ENCODE measurements at regions of chr19 and their contacts with region 1.

Region 1: GRCh38 chr19:42244347-42245220 is 2.2 kb upstream of the GSK3A start:
- DNase-seq: peak; percentile 79 to 96 (median 91)
- ATAC-seq: peak; percentile 38
- H3K4me3 ChIP-seq: peak overlapping the region; percentile 68 to 85
- H3K4me3 Mint-ChIP-seq: peak overlapping the region; percentile 98
- H3K27ac ChIP-seq: peak overlapping the region; percentile 49 to 92
- H3K27ac Mint-ChIP-seq: peak overlapping the region; percentile 94
- H3K4me1 ChIP-seq: peaks cover 36% of the 10 kb centered on the region
- H3K4me1 Mint-ChIP-seq: peaks cover 50% of the 10 kb centered on the region
- H3K27me3 ChIP-seq: no peaks in the 10 kb centered on the region
- H3K27me3 Mint-ChIP-seq: no peaks in the 10 kb centered on the region
- CTCF ChIP-seq: peak; percentile 68

Region 2: DNA sequence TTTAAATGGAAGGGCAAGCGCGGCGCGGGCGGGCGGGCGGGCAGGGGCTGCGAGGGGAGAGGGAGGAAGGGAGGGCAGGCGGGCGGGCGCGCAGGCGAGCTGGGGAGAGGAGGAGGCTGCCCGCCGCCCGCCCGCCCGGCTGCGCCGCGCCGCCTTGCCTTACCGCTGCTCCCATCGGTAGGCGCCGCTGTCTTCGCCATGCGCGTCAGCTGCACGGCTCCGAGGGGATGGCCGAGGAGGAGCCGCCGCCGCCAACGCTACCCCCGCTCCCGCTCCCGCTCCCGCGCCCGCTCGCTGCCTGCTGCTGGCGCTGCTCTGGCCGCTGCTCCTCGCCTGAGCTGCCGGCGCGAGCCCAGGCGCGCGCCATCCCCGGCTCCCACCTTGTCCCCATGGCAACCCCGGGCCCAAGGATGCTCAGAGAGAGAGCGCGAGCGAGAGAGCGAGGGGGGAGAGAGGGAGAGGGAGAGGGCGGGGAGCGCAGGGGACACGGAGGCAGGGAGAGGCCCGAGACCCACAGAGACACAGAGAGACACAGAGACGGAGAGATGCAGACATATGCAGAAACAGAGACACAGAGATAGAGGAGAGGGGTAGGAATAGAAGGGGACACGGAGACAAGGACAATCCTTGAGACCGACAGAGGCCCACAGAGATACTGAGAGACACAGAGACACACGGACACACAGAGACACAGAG is 67.4 kb before region 1 on chr19:
- CTCF ChIA-PET with region 1: interaction called, 4 read pairs
- POLR2A ChIA-PET with region 1: interaction called, 5 read pairs
- intact Hi-C with region 1: loop called (anchors 1 to 2 kb)
- DNase-seq: peak; percentile 52 to 90 (median 74)
- ATAC-seq: peak; percentile 95
- H3K4me3 ChIP-seq: peak overlapping the region; percentile 49 to 50
- H3K4me3 Mint-ChIP-seq: no peak overlapping the region
- H3K27ac ChIP-seq: no peak overlapping the region
- H3K27ac Mint-ChIP-seq: no peak overlapping the region
- H3K4me1 ChIP-seq: peaks cover 17% of the 10 kb centered on the region
- H3K4me1 Mint-ChIP-seq: peaks cover 12% of the 10 kb centered on the region
- H3K27me3 ChIP-seq: peaks cover 0 to 22% of the 10 kb centered on the region in 2 experiments
- H3K27me3 Mint-ChIP-seq: peaks cover 27% of the 10 kb centered on the region
- CTCF ChIP-seq: peak; percentile 43

Region 3: GRCh38 chr19:42219812-42220750 is 24.5 kb before region 1 on chr19 and contains the start of gene ZNF526:
- CTCF ChIA-PET with region 1: interaction called, 3 read pairs
- POLR2A ChIA-PET with region 1: interaction called, 28 read pairs
- intact Hi-C with region 1: loop called (anchors 1 kb)
- DNase-seq: peak; percentile 94 to 99 (median 96)
- ATAC-seq: peak; percentile 79
- H3K4me3 ChIP-seq: peak within 1 kb of the TSS; percentile 85 to 90
- H3K4me3 Mint-ChIP-seq: peak within 1 kb of the TSS; percentile 96
- H3K27ac ChIP-seq: peak within 1 kb of the TSS; percentile 72 to 73
- H3K27ac Mint-ChIP-seq: peak within 1 kb of the TSS; percentile 95
- H3K4me1 ChIP-seq: peaks cover 42% of the 10 kb centered on the region
- H3K4me1 Mint-ChIP-seq: peaks cover 52% of the 10 kb centered on the region
- H3K27me3 ChIP-seq: no peaks in the 10 kb centered on the region
- H3K27me3 Mint-ChIP-seq: no peaks in the 10 kb centered on the region
- CTCF ChIP-seq: no peak
- total RNA-seq, gene ZNF526: 8.7 to 9.4 TPM

Region 4: DNA sequence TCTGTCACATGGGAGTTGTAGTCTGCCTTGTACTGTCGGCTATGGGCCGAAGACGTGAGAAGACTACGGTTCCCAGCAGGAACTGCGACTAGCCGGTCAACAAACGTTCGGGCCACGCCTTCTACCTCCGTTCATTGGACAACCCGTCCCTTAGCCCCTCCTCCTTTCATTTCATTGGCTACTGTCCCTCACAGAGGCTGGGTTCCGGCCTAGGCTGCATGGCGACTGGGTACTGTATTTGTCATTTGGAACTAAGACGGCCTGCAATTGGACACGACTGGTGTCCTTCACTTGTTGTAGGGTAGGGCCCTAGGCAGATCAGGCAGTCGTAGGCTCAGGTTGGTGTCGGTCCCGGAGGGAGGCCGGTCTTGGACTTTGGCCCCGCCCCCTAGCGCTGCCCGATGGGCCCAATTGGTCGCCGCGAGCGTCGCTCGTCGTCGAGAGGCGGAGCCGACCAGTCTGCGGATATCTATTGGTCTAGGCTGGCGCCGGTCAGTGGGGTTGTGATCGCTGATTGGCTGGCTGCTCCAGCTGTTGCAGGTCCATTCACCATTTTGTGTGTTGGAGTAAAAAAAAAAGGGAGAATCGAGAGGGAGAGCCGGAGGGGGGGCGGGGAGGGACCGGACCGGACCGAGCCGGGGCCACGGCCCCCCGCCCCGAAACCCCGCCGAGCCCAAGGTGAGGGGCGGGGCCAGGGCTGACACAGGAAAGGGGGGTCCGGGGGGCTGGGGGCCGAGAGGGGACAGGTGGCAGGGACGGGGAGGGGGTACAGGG is 24.3 kb after region 1 on chr19 and contains the start of gene CIC:
- CTCF ChIA-PET with region 1: interaction called, 8 read pairs
- POLR2A ChIA-PET with region 1: interaction called, 7 read pairs
- intact Hi-C with region 1: loop called (anchors 1 kb)
- DNase-seq: peak; percentile 97 to 100 (median 99)
- ATAC-seq: peak; percentile 70
- H3K4me3 ChIP-seq: peak within 1 kb of the TSS; percentile 70 to 83
- H3K4me3 Mint-ChIP-seq: peak within 1 kb of the TSS; percentile 86
- H3K27ac ChIP-seq: peak within 1 kb of the TSS; percentile 93 to 99
- H3K27ac Mint-ChIP-seq: peak within 1 kb of the TSS; percentile 97
- H3K4me1 ChIP-seq: peaks cover 29% of the 10 kb centered on the region
- H3K4me1 Mint-ChIP-seq: peaks cover 34% of the 10 kb centered on the region
- H3K27me3 ChIP-seq: no peaks in the 10 kb centered on the region
- H3K27me3 Mint-ChIP-seq: no peaks in the 10 kb centered on the region
- CTCF ChIP-seq: no peak
- total RNA-seq, gene CIC: 111 to 112 TPM

Region 5: GRCh38 chr19:42295831-42296525 is 51.4 kb after region 1 on chr19:
- CTCF ChIA-PET with region 1: interaction called, 11 read pairs
- POLR2A ChIA-PET with region 1: no interaction called
- intact Hi-C with region 1: loop called in 1 of 2 experiments (anchors 1 kb)
- DNase-seq: peak; percentile 85 to 95 (median 89)
- ATAC-seq: peak; percentile 100
- H3K4me3 ChIP-seq: no peak overlapping the region
- H3K4me3 Mint-ChIP-seq: no peak overlapping the region
- H3K27ac ChIP-seq: no peak overlapping the region
- H3K27ac Mint-ChIP-seq: no peak overlapping the region
- H3K4me1 ChIP-seq: peaks cover 8% of the 10 kb centered on the region
- H3K4me1 Mint-ChIP-seq: peaks cover 9% of the 10 kb centered on the region
- H3K27me3 ChIP-seq: no peaks in the 10 kb centered on the region
- H3K27me3 Mint-ChIP-seq: no peaks in the 10 kb centered on the region
- CTCF ChIP-seq: peak; percentile 96

Region 6: GRCh38 chr19:42325273-42325895 is 80.8 kb after region 1 on chr19 and contains the start of gene MEGF8:
- CTCF ChIA-PET with region 1: interaction called, 3 read pairs
- POLR2A ChIA-PET with region 1: no interaction called
- intact Hi-C with region 1: loop called (anchors 1 kb)
- DNase-seq: peak; percentile 96 to 99 (median 98)
- ATAC-seq: peak; percentile 93
- H3K4me3 ChIP-seq: peak within 1 kb of the TSS; percentile 85 to 98
- H3K4me3 Mint-ChIP-seq: peak within 1 kb of the TSS; percentile 97
- H3K27ac ChIP-seq: peak within 1 kb of the TSS; percentile 36 to 56
- H3K27ac Mint-ChIP-seq: peak within 1 kb of the TSS; percentile 88
- H3K4me1 ChIP-seq: peaks cover 12% of the 10 kb centered on the region
- H3K4me1 Mint-ChIP-seq: peaks cover 24% of the 10 kb centered on the region
- H3K27me3 ChIP-seq: peaks cover 4 to 7% of the 10 kb centered on the region in 2 experiments
- H3K27me3 Mint-ChIP-seq: peaks cover 12% of the 10 kb centered on the region
- CTCF ChIP-seq: peak; percentile 66
- total RNA-seq, gene MEGF8: 5.2 to 5.9 TPM

Measured in CD8-positive, alpha-beta T cell (primary cell).